ENCODE measurements at regions of chr1 and their contacts with region 1.

Region 1: DNA sequence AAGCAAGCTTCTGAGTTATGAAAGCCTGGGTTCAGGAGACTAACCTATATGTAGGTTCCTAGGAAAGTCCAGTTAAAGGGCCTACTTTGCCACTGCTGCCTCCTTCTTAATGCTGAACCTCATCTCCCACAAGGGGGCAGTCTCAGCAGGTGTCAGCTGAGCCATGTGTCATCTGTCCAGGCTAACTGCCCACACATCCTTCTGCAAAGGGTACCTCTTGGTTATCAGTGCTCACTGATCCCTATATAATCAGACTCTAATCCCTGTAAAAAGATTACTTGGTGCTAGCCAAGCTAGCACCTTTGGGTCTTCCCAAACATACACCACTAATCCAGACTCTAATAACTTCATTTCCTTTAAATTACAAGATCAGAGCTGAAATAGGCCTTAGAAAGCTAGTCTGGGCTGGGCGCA is 9.0 kb downstream of the PRDX1 start:
- DNase-seq: peak; percentile 76
- ATAC-seq: peak; percentile 66
- H3K4me3 ChIP-seq: no peak overlapping the region
- H3K4me3 Mint-ChIP-seq: no peak overlapping the region
- H3K27ac ChIP-seq: no peak overlapping the region
- H3K27ac Mint-ChIP-seq: peak overlapping the region; percentile 76
- H3K4me1 ChIP-seq: no peaks in the 10 kb centered on the region
- H3K4me1 Mint-ChIP-seq: peaks cover 8% of the 10 kb centered on the region
- H3K27me3 ChIP-seq: no peaks in the 10 kb centered on the region
- H3K27me3 Mint-ChIP-seq: no peaks in the 10 kb centered on the region
- CTCF ChIP-seq: peak; percentile 89

Region 2: DNA sequence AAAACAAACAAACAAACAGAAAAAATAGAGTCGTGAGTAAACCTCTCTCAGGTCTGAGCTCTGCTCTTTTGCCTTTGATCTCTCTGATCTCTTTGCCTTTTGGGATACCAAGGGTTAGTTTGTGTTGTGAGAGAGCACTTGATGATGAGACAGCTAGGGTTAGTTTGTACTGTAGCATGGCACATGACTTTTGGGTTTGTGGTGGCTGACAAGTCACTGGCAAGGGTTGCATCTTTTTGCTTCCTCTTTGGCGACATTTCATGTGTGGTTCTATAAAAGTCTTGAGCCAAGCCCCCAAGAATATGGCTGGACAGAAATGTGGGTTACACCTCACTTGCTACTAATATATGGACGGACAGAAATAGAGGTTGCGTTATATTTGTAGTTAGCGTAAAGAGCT is 82.2 kb before region 1 on chr1:
- CTCF ChIA-PET with region 1: no interaction called
- POLR2A ChIA-PET with region 1: no interaction called
- intact Hi-C with region 1: no loop called
- DNase-seq: no peak
- ATAC-seq: peak; percentile 14
- H3K4me3 ChIP-seq: no peak overlapping the region
- H3K4me3 Mint-ChIP-seq: peak overlapping the region; percentile 55
- H3K27ac ChIP-seq: peak overlapping the region in 1 of 2 donors; percentile 51
- H3K27ac Mint-ChIP-seq: peak overlapping the region; percentile 89
- H3K4me1 ChIP-seq: peaks cover 7 to 14% of the 10 kb centered on the region in 2 donors
- H3K4me1 Mint-ChIP-seq: peaks cover 19% of the 10 kb centered on the region
- H3K27me3 ChIP-seq: no peaks in the 10 kb centered on the region
- H3K27me3 Mint-ChIP-seq: no peaks in the 10 kb centered on the region
- CTCF ChIP-seq: no peak

Region 3: DNA sequence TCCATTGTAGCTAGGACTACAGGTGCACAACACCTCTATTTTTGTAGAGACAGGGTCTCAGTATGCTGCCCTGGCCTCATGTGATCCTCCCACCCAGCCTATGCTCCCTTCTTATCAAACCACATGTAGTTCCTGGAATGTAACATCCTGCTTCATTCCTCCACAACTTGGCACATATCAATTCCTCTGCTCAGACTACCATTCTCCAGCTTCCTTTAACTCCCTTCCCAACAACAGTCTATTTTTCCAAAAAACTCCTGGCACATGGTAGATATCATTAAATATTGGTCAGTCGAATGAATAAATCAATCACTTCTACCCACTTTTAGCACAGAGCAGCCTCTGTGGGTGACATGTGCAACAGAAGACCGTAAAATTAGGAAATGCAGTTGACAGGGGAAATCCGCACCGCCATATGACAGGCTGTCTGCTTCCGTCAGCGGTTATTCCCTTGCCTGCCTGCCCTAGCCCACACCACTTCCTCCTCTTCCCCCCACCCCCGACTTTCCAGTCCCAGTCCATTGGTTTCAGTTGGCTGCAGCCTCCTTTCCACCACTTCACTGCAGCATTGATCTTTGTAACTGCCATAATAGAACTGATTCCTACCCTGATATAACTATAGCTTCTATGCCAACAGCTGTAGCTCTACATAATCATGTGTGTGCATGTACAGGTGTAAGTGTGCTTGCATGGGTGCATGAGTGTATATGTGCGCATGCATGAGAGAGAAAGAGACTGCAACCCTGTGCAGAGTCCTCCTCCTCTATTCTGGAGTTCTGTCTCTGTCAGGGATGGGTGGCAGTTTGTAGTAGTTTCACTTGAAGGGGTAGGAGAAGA is 31.2 kb after region 1 on chr1:
- CTCF ChIA-PET with region 1: interaction called, 9 read pairs
- POLR2A ChIA-PET with region 1: interaction called, 13 read pairs
- intact Hi-C with region 1: no loop called
- DNase-seq: peak; percentile 94
- ATAC-seq: peak; percentile 90
- H3K4me3 ChIP-seq: peak overlapping the region in 4 of 5 experiments; percentile 22 to 56 (median 30)
- H3K4me3 Mint-ChIP-seq: peak overlapping the region; percentile 81
- H3K27ac ChIP-seq: peak overlapping the region; percentile 78 to 97
- H3K27ac Mint-ChIP-seq: peak overlapping the region; percentile 82
- H3K4me1 ChIP-seq: peaks cover 38 to 57% of the 10 kb centered on the region in 2 donors
- H3K4me1 Mint-ChIP-seq: peaks cover 46% of the 10 kb centered on the region
- H3K27me3 ChIP-seq: no peaks in the 10 kb centered on the region
- H3K27me3 Mint-ChIP-seq: no peaks in the 10 kb centered on the region
- CTCF ChIP-seq: no peak

Region 4: DNA sequence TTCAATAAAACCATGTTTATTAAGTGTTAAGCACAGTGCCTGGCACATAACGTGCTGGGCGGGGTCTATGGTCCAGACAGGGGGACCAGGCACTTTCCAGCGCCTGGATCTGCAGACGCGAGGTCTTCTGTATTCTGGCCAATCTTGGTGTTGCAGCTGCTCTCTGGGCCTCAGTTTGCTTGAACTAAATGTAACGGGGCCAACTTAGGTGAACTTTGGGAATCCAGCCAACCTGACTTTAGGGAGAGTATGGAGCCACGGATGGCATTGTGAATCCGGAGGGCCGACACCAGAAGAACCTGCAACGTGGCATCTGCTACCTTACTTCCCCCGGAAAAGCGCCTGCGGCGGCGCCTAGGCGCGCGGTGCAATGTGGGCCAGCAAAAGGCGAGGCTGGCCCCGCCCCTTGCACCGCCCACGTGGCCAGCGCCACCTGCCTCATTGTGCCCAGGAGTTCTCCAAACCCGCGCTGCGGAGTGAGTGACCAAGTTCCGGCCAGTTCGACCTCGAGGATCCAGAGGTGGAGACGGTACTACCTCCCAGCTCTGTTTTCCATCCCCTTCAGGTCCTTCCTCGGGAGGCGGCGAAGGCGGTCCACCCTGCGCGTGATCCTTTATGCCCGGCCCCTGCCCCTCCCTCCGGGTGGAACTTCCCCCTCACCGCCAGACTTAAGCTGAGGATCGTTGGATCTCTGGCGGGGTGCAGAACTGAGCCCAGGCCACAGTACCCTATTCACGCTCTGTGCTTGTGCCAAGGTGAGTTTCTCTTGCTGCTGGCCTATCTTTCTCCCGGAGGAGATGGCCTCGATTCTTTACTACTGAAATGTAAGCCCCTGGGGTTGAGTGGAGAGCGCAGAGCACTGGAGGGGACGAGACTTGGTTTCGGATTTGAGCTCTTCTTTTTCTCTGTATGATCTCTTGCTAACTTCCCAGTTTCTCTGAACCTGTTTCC is 38.0 kb after region 1 on chr1 and contains the start of gene AKR1A1:
- CTCF ChIA-PET with region 1: interaction called, 26 read pairs
- POLR2A ChIA-PET with region 1: interaction called, 3 read pairs
- intact Hi-C with region 1: no loop called
- DNase-seq: peak; percentile 96
- ATAC-seq: peak; percentile 93
- H3K4me3 ChIP-seq: peak within 1 kb of the TSS; percentile 65 to 100 (median 90)
- H3K4me3 Mint-ChIP-seq: peak within 1 kb of the TSS; percentile 97
- H3K27ac ChIP-seq: peak within 1 kb of the TSS; percentile 84 to 96
- H3K27ac Mint-ChIP-seq: peak within 1 kb of the TSS; percentile 96
- H3K4me1 ChIP-seq: peaks cover 23 to 28% of the 10 kb centered on the region in 2 donors
- H3K4me1 Mint-ChIP-seq: peaks cover 30% of the 10 kb centered on the region
- H3K27me3 ChIP-seq: no peaks in the 10 kb centered on the region
- H3K27me3 Mint-ChIP-seq: no peaks in the 10 kb centered on the region
- CTCF ChIP-seq: no peak
- total RNA-seq, gene AKR1A1: 101 and 145 TPM in 2 replicates

Region 5: GRCh38 chr1:45557422-45557944 is 44.8 kb after region 1 on chr1:
- CTCF ChIA-PET with region 1: interaction called, 25 read pairs
- POLR2A ChIA-PET with region 1: interaction called, 3 read pairs
- intact Hi-C with region 1: no loop called
- DNase-seq: no peak
- ATAC-seq: no peak
- H3K4me3 ChIP-seq: no peak overlapping the region
- H3K4me3 Mint-ChIP-seq: no peak overlapping the region
- H3K27ac ChIP-seq: peak overlapping the region in 1 of 2 donors; percentile 34
- H3K27ac Mint-ChIP-seq: peak overlapping the region; percentile 50
- H3K4me1 ChIP-seq: peaks cover under 1 to 2% of the 10 kb centered on the region in 2 donors
- H3K4me1 Mint-ChIP-seq: peaks cover 11% of the 10 kb centered on the region
- H3K27me3 ChIP-seq: no peaks in the 10 kb centered on the region
- H3K27me3 Mint-ChIP-seq: no peaks in the 10 kb centered on the region
- CTCF ChIP-seq: no peak